Activated B cell treated with CpG ODN at 0.5 μM for 24 hours (primary cell): ENCODE measurements at regions of chr1 and their contacts with region 1.

Region 1: DNA sequence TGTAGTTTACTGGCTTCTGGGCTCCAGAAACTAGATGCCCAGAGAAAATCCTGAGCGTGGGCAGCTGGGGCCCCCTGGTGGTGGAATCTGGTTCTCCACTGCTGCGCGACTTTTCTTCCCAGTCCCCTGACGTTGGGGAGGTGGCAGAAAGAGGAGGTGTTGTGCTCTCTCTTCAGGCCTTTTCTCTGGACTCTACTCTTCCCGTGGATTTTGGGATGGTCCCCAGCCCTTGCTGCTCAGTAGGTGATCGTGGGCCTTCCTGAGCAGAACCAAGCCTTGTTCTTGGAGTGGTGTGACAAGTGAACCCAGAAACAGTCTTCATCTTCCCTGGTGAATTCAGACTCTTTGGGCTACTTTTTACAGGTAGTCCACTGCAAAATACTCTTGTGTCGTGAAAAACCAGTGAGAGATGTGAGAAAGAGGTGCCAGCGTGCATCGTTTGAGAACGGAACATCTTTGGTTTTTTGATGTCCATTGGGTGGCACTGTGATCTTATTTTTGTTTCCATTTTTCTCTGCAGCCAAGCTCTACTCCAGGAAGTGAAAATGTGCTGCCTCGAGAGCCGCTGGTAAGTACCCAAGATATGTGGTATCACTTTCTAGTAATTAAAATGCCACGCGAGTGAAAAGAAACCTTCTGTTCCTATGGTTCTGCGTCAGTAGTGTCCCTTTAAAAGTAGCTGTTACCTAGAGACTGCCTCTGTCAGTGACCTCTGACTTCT is 20.2 kb downstream of the PEX14 start:
- DNase-seq: peak; percentile 70
- ATAC-seq: peak; percentile 90
- H3K4me3 Mint-ChIP-seq: peak overlapping the region; percentile 81
- H3K27ac Mint-ChIP-seq: peak overlapping the region; percentile 91
- H3K4me1 Mint-ChIP-seq: peaks cover 21% of the 10 kb centered on the region
- H3K27me3 Mint-ChIP-seq: no peaks in the 10 kb centered on the region
- CTCF ChIP-seq: peak; percentile 94

Region 2: GRCh38 chr1:10324627-10325026 is 170.3 kb before region 1 on chr1:
- CTCF ChIA-PET with region 1: no interaction called
- POLR2A ChIA-PET with region 1: no interaction called
- intact Hi-C with region 1: no loop called
- DNase-seq: no peak
- ATAC-seq: no peak
- H3K4me3 Mint-ChIP-seq: no peak overlapping the region
- H3K27ac Mint-ChIP-seq: no peak overlapping the region
- H3K4me1 Mint-ChIP-seq: no peaks in the 10 kb centered on the region
- H3K27me3 Mint-ChIP-seq: no peaks in the 10 kb centered on the region
- CTCF ChIP-seq: no peak

Region 3: GRCh38 chr1:10430216-10431069 is 64.5 kb before region 1 on chr1 and contains the start of gene CENPS:
- CTCF ChIA-PET with region 1: interaction called, 57 read pairs
- POLR2A ChIA-PET with region 1: interaction called, 6 read pairs
- intact Hi-C with region 1: loop called (anchors 1 kb)
- DNase-seq: peak; percentile 91
- ATAC-seq: peak; percentile 86
- H3K4me3 Mint-ChIP-seq: peak within 1 kb of the TSS; percentile 92
- H3K27ac Mint-ChIP-seq: peak within 1 kb of the TSS; percentile 96
- H3K4me1 Mint-ChIP-seq: peaks cover 28% of the 10 kb centered on the region
- H3K27me3 Mint-ChIP-seq: no peaks in the 10 kb centered on the region
- CTCF ChIP-seq: peak; percentile 57
- total RNA-seq, gene CENPS: 9.2 and 15.2 TPM in 2 replicates

Region 4: DNA sequence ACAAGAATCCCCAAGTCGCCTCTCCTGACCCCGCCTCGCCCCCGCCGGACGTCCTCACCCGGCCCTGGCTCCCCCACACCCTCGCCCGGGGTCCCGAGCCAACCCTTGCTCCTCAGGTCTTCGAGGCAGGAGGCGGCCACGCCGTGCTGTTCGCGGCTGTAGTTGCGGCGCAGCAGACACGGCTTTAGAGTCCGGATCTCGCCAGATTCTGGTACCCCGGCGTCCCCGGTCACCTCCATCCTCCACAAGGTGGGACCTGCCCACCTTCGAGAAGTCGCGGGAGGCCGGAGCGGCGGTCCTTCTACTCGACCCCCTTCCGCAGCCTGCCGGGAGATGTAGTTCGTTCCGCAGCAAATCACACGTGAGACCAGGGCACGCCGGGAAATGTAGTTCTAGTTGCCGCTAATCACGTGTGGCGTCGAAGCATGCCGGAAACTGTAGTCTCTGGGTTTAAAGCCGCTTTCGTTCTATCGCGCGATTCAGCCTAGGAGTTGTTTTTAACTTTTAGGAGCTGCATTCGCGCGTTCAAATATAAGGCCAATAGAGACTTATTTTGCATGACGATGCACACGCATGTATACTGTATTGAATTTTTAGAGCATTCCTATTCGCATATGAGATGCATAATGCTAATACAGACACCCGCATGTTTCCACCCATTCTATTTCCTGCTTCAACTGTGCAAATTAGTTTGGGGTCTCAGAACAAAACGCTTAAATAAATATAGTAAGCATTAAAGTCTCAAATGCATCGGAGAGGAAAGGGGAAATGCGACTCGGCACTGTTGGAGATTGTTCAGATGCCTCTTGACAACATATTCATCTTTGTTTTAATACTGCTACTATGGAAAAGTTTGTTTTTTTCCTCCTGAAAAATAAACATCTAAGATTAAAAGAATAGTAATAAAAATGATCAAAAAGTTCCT is 22.4 kb before region 1 on chr1 and contains the start of gene DFFA:
- CTCF ChIA-PET with region 1: interaction called, 10 read pairs
- POLR2A ChIA-PET with region 1: interaction called, 4 read pairs
- intact Hi-C with region 1: loop called (anchors 1 kb)
- DNase-seq: peak; percentile 82
- ATAC-seq: peak; percentile 78
- H3K4me3 Mint-ChIP-seq: peak within 1 kb of the TSS; percentile 94
- H3K27ac Mint-ChIP-seq: peak within 1 kb of the TSS; percentile 90
- H3K4me1 Mint-ChIP-seq: peaks cover 51% of the 10 kb centered on the region
- H3K27me3 Mint-ChIP-seq: no peaks in the 10 kb centered on the region
- CTCF ChIP-seq: no peak
- total RNA-seq, gene DFFA: 34.3 and 39.0 TPM in 2 replicates

Region 5: GRCh38 chr1:10694633-10695627 is 200.0 kb after region 1 on chr1:
- CTCF ChIA-PET with region 1: no interaction called
- POLR2A ChIA-PET with region 1: no interaction called
- intact Hi-C with region 1: loop called (anchors 1 kb)
- DNase-seq: peak; percentile 79
- ATAC-seq: peak; percentile 76
- H3K4me3 Mint-ChIP-seq: peak overlapping the region; percentile 81
- H3K27ac Mint-ChIP-seq: peak overlapping the region; percentile 74
- H3K4me1 Mint-ChIP-seq: peaks cover 24% of the 10 kb centered on the region
- H3K27me3 Mint-ChIP-seq: peaks cover 5% of the 10 kb centered on the region
- CTCF ChIP-seq: no peak

Region 6: GRCh38 chr1:10909697-10910671 is 415.1 kb after region 1 on chr1:
- CTCF ChIA-PET with region 1: interaction called, 8 read pairs
- POLR2A ChIA-PET with region 1: no interaction called
- intact Hi-C with region 1: loop called (anchors 1 kb)
- DNase-seq: peak; percentile 57
- ATAC-seq: peak; percentile 67
- H3K4me3 Mint-ChIP-seq: no peak overlapping the region
- H3K27ac Mint-ChIP-seq: no peak overlapping the region
- H3K4me1 Mint-ChIP-seq: peaks cover 1% of the 10 kb centered on the region
- H3K27me3 Mint-ChIP-seq: peaks cover 7% of the 10 kb centered on the region
- CTCF ChIP-seq: no peak

Region 7: GRCh38 chr1:10960411-10961299 is 465.7 kb after region 1 on chr1:
- CTCF ChIA-PET with region 1: interaction called, 3 read pairs
- POLR2A ChIA-PET with region 1: no interaction called
- intact Hi-C with region 1: loop called (anchors 1 kb)
- DNase-seq: peak; percentile 72
- ATAC-seq: peak; percentile 92
- H3K4me3 Mint-ChIP-seq: no peak overlapping the region
- H3K27ac Mint-ChIP-seq: no peak overlapping the region
- H3K4me1 Mint-ChIP-seq: peaks cover 10% of the 10 kb centered on the region
- H3K27me3 Mint-ChIP-seq: peaks cover 26% of the 10 kb centered on the region
- CTCF ChIP-seq: no peak